Gastrocnemius medialis (tissue), 4 donors: ENCODE measurements at regions of chr5 and their contacts with region 1.

Region 1: GRCh38 chr5:173293817-173294672 is 34.2 kb downstream of the STC2 start:
- DNase-seq: peak; percentile 40 to 49
- ATAC-seq: peak; percentile 70 to 90
- H3K4me3 ChIP-seq: no peak overlapping the region
- H3K27ac ChIP-seq: no peak overlapping the region
- H3K4me1 ChIP-seq: peaks cover 3 to 6% of the 10 kb centered on the region in 2 donors
- H3K27me3 ChIP-seq: peaks cover 0 to 1% (median 0%) of the 10 kb centered on the region in 3 donors
- CTCF ChIP-seq: peak; percentile 82 to 92 (median 87)
- POLR2A ChIP-seq: no peak

Region 2: DNA sequence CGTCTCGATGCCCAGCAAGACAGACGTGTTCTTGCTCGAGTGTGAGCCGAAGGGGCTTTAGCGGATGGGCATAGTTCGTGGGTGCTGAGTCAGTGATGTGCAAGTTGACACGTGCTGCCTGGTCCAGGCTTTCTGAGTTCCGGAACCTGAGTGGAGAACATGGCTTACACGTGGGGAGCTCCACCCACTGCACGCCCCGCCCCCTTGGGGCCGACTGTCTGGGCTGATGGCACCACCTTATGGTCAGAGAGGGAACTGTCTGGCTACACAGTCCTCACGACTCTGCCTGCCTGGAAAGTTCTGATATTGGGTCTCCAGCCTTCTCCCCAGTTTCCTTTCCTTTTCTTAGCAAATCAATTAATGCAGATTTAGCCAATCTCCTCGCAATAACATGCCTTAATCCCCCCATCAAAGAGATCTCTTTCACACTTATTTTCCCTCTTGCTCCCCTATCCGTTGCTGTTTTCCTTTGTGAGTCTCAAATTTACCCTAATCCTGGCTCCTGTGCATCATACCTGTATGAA is 38.0 kb after region 1 on chr5:
- in situ Hi-C with region 1: loop called in 3 of 4 experiments (anchors 5 kb)
- intact Hi-C with region 1: loop called (anchors 1 kb)
- DNase-seq: peak; percentile 49 to 82
- ATAC-seq: peak; percentile 47
- H3K4me3 ChIP-seq: no peak overlapping the region
- H3K27ac ChIP-seq: no peak overlapping the region
- H3K4me1 ChIP-seq: peaks cover 8 to 27% of the 10 kb centered on the region in 2 donors
- H3K27me3 ChIP-seq: no peaks in the 10 kb centered on the region
- CTCF ChIP-seq: peak; percentile 84 to 93 (median 90)
- POLR2A ChIP-seq: no peak

Region 3: DNA sequence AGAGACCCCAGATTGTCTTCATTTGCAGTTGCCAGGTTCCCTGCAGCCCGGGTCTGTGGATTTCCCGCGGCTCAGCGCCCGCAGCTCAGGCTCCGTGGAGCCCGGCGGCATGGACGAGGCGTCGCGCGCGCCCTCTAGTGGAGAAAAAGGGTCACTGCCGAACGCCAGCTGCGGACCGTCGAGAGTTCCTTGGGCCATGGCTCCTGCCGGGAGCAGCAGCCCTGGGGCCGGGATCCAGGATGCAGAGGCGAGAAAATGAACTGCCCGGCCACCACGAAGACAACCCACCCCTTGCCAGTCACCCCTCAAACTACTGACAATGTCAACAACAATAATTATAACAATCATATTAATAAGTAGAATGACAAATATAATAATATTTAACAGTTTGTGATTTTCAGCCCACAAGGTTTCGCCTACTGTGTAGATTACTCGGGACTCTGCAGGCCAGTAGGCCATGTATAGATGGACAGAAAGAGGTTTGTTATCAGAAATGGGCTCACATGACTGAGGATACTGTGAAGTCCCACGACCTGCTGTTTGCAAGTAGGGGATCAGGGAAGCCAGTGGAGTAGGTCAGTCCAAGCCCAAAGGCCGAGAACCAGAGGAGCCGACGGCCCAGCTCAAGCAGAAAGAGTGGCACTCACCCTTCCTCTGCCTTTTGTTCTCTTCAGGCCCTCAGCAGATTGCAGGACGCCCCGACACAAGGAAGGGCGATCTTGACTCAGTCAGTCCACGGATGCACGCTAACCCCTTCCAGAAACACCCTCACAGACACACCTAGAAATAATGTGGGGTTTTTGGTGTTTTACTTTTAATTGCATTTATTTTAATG is 279.3 kb after region 1 on chr5:
- in situ Hi-C with region 1: loop called in 1 of 4 experiments (anchors 5 kb)
- intact Hi-C with region 1: loop called (anchors 1 kb)
- DNase-seq: peak; percentile 42 to 64
- ATAC-seq: peak; percentile 93 to 94
- H3K4me3 ChIP-seq: peak overlapping the region in 3 of 4 donors; percentile 25 to 29 (median 28)
- H3K27ac ChIP-seq: no peak overlapping the region
- H3K4me1 ChIP-seq: peaks cover 5 to 7% of the 10 kb centered on the region in 2 donors
- H3K27me3 ChIP-seq: no peaks in the 10 kb centered on the region
- CTCF ChIP-seq: peak; percentile 85 to 99 (median 94)
- POLR2A ChIP-seq: no peak

Region 4: GRCh38 chr5:173581408-173582215 is 287.6 kb after region 1 on chr5:
- in situ Hi-C with region 1: loop called in 2 of 4 experiments (anchors 5 kb)
- intact Hi-C with region 1: no loop called
- DNase-seq: no peak
- ATAC-seq: no peak
- H3K4me3 ChIP-seq: no peak overlapping the region
- H3K27ac ChIP-seq: no peak overlapping the region
- H3K4me1 ChIP-seq: no peaks in the 10 kb centered on the region
- H3K27me3 ChIP-seq: no peaks in the 10 kb centered on the region
- CTCF ChIP-seq: peak; percentile 28 to 65 (median 56)
- POLR2A ChIP-seq: no peak

Region 5: GRCh38 chr5:173984218-173984617 is 690.2 kb after region 1 on chr5:
- in situ Hi-C with region 1: loop called in 2 of 4 experiments (anchors 25 kb)
- intact Hi-C with region 1: loop called (anchors 10 kb)
- DNase-seq: no peak
- ATAC-seq: peak; percentile 52 to 53
- H3K4me3 ChIP-seq: no peak overlapping the region
- H3K27ac ChIP-seq: no peak overlapping the region
- H3K4me1 ChIP-seq: no peaks in the 10 kb centered on the region
- H3K27me3 ChIP-seq: no peaks in the 10 kb centered on the region
- CTCF ChIP-seq: peak; percentile 14 to 48 (median 34)
- POLR2A ChIP-seq: no peak

Region 6: GRCh38 chr5:174311531-174312269 is 1017.7 kb after region 1 on chr5:
- in situ Hi-C with region 1: loop called in 2 of 4 experiments (anchors 25 kb)
- intact Hi-C with region 1: loop called (anchors 10 kb)
- DNase-seq: peak in 1 of 2 donors; percentile 41
- ATAC-seq: peak; percentile 69 to 73
- H3K4me3 ChIP-seq: peak overlapping the region; percentile 33 to 59 (median 37)
- H3K27ac ChIP-seq: peak overlapping the region in 2 of 4 donors; percentile 8 to 74
- H3K4me1 ChIP-seq: peaks cover 15 to 19% of the 10 kb centered on the region in 2 donors
- H3K27me3 ChIP-seq: no peaks in the 10 kb centered on the region
- CTCF ChIP-seq: peak; percentile 63 to 89 (median 82)
- POLR2A ChIP-seq: no peak